ENCODE measurements at regions of chr5 and their contacts with region 1.

Region 1: DNA sequence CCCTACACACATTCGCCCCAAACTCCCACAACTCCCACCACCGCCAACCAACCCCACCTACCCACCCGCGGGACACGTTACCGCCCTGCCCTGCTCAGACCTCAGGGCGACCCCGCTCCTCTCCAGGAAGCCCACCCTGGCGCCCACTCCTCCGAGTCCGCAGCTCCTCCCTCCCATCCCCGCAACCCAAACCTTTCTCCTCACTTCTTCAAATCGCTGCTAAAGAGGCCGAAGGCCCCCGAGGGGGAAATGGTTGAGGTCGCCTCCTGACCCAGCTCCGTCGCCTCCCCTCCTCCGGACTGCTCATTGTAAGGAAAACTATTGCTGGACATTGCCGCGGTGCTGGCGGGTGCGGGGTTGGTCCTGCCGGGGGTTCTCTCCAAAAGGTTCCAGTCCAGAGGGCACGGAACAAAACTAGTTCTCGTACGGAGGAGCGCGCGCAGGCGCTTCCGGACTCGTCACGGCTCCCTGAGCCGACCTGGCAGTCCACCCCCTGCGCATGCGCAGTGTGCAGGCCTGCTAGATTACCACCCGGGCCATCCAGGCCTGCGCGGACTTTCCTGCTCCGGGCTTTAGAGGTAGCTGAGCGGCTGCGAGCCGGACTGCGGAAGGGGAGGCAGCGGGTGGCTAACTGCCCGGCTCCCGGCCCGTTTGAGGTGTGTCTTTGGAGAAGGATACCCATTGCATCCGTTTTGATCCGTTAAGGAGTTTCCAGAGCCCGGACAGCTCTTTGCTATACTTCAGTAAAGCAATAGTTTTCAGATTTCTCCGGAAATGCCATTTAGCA is at the start of gene AP3B1:
- DNase-seq: peak; percentile 96 to 97 (median 97)
- H3K4me3 ChIP-seq: peak within 1 kb of the TSS; percentile 88 to 99
- H3K4me3 Mint-ChIP-seq: peak within 1 kb of the TSS; percentile 91 to 100 (median 99)
- H3K27ac ChIP-seq: peak within 1 kb of the TSS; percentile 85
- H3K27ac Mint-ChIP-seq: peak within 1 kb of the TSS; percentile 86 to 100 (median 99)
- H3K4me1 ChIP-seq: peaks cover 29% of the 10 kb centered on the region
- H3K4me1 Mint-ChIP-seq: peaks cover 31 to 49% (median 41%) of the 10 kb centered on the region in 4 donors
- H3K27me3 ChIP-seq: no peaks in the 10 kb centered on the region
- H3K27me3 Mint-ChIP-seq: no peaks in the 10 kb centered on the region
- total RNA-seq, gene AP3B1: 33.3 to 36.9 TPM

Region 2: GRCh38 chr5:77491783-77492652 is 802.4 kb before region 1 on chr5 and contains the start of gene WDR41:
- CTCF ChIA-PET with region 1: interaction called, 4 read pairs
- POLR2A ChIA-PET with region 1: interaction called, 10 read pairs
- intact Hi-C with region 1: loop called (anchors 1 kb)
- DNase-seq: peak; percentile 79 to 87 (median 84)
- H3K4me3 ChIP-seq: peak within 1 kb of the TSS; percentile 57 to 91
- H3K4me3 Mint-ChIP-seq: peak within 1 kb of the TSS; percentile 85 to 95 (median 91)
- H3K27ac ChIP-seq: peak within 1 kb of the TSS; percentile 64
- H3K27ac Mint-ChIP-seq: peak within 1 kb of the TSS; percentile 65 to 94 (median 91)
- H3K4me1 ChIP-seq: peaks cover 7% of the 10 kb centered on the region
- H3K4me1 Mint-ChIP-seq: peaks cover 9 to 14% (median 10%) of the 10 kb centered on the region in 4 donors
- H3K27me3 ChIP-seq: no peaks in the 10 kb centered on the region
- H3K27me3 Mint-ChIP-seq: peaks cover 10 to 12% of the 10 kb centered on the region in 2 donors
- total RNA-seq, gene WDR41: 11.0 to 14.0 TPM

Region 3: GRCh38 chr5:77775790-77776553 is 518.5 kb before region 1 on chr5 and contains the start of gene TBCA:
- CTCF ChIA-PET with region 1: no interaction called
- POLR2A ChIA-PET with region 1: interaction called, 3 read pairs
- intact Hi-C with region 1: loop called (anchors 1 kb)
- DNase-seq: peak; percentile 91 to 94 (median 93)
- H3K4me3 ChIP-seq: peak within 1 kb of the TSS; percentile 61 to 85
- H3K4me3 Mint-ChIP-seq: peak within 1 kb of the TSS; percentile 90 to 98 (median 96)
- H3K27ac ChIP-seq: peak within 1 kb of the TSS; percentile 97
- H3K27ac Mint-ChIP-seq: peak within 1 kb of the TSS; percentile 88 to 99 (median 98)
- H3K4me1 ChIP-seq: peaks cover 46% of the 10 kb centered on the region
- H3K4me1 Mint-ChIP-seq: peaks cover 33 to 50% (median 45%) of the 10 kb centered on the region in 4 donors
- H3K27me3 ChIP-seq: no peaks in the 10 kb centered on the region
- H3K27me3 Mint-ChIP-seq: no peaks in the 10 kb centered on the region
- total RNA-seq, gene TBCA: 80.4 to 97.2 TPM

Region 4: GRCh38 chr5:78359831-78360673 is 65.6 kb after region 1 on chr5 and contains the start of gene SCAMP1:
- CTCF ChIA-PET with region 1: interaction called, 99 read pairs
- POLR2A ChIA-PET with region 1: interaction called, 274 read pairs
- intact Hi-C with region 1: loop called (anchors 1 kb)
- DNase-seq: peak; percentile 87 to 97 (median 94)
- H3K4me3 ChIP-seq: peak within 1 kb of the TSS; percentile 91 to 97
- H3K4me3 Mint-ChIP-seq: peak within 1 kb of the TSS; percentile 92 to 98 (median 95)
- H3K27ac ChIP-seq: peak within 1 kb of the TSS; percentile 91
- H3K27ac Mint-ChIP-seq: peak within 1 kb of the TSS; percentile 85 to 98 (median 96)
- H3K4me1 ChIP-seq: peaks cover 44% of the 10 kb centered on the region
- H3K4me1 Mint-ChIP-seq: peaks cover 30 to 78% (median 47%) of the 10 kb centered on the region in 4 donors
- H3K27me3 ChIP-seq: no peaks in the 10 kb centered on the region
- H3K27me3 Mint-ChIP-seq: no peaks in the 10 kb centered on the region
- total RNA-seq, gene SCAMP1: 28.9 to 29.7 TPM

Region 5: DNA sequence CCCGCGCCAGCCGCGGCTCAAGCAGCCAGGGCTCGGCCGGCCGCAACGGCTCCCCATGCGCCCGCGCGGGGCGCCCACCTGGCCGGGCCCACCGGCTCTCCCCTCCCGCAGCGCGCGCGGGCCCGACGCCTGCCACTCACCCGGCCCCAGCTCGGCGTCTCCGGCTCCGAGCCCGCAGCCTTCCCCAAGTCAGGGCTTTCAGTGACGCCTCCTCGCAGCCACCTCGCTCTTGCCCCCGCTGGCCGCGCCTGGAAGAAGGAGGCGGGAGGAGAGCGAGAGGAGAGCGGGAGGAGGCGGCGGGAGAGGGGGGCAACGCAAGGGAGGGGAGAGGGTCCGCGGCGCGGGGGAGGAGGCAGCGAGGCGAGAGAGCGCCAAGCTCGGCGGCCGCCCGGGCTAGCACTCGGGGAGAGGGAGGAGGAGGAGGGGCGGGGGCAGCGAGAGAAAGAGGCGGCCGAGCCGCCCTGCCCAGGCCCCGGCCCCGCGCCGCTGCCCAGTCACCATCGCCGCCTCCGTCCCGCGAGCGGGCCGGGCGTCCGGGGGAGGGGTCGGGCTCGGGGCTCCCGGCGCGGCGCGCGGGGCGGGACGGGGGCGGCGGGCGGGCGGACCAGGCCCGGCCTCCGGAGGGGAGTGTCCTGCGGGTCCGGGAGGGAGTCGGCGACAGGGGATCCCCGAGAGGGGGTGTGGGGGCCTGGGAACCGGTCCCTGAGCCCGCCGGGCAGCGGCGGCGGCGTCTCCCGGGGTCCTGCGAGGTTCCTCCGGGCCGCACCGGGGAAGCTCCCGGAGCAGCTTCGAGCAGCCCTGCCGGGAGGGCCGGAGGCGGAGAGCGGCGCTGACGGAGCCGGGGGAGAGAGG is 354.1 kb after region 1 on chr5 and contains the start of gene LHFPL2:
- CTCF ChIA-PET with region 1: no interaction called
- POLR2A ChIA-PET with region 1: no interaction called
- intact Hi-C with region 1: no loop called
- DNase-seq: peak in 2 of 5 donors; percentile 5 to 9
- H3K4me3 ChIP-seq: no peak within 1 kb of the TSS
- H3K4me3 Mint-ChIP-seq: peak within 1 kb of the TSS; percentile 69 to 86 (median 80)
- H3K27ac ChIP-seq: no peak within 1 kb of the TSS
- H3K27ac Mint-ChIP-seq: no peak within 1 kb of the TSS
- H3K4me1 ChIP-seq: peaks cover 15% of the 10 kb centered on the region
- H3K4me1 Mint-ChIP-seq: peaks cover 8 to 18% (median 8%) of the 10 kb centered on the region in 4 donors
- H3K27me3 ChIP-seq: peaks cover 28% of the 10 kb centered on the region
- H3K27me3 Mint-ChIP-seq: peaks cover 41 to 46% of the 10 kb centered on the region in 2 donors
- total RNA-seq, gene LHFPL2: 2.7 TPM

Region 6: DNA sequence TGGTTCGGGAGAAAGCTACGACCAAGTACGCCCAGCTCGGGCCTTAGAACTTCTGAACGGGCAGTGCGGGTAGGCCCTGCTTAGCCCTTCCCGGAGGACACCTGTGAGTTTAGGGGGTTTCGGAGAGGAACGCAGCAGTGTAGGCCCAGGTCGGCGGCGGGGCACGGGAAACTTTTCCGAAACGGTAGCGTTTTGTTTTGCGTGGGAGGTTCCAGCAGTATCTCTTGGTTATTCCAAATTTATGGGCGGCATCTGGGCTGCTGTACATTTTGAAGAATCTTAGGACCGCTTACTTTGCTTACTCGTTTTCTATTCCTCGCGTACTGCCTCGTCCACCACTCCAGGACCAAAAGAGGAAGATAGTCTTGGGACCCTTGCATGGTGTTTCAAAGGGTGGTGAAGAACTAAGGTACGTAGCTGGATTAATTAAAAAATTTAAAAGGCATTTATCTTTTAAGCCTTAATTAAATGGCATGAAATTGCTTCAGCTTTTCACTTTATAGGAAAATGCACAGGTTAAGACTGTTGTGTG is 1318.3 kb after region 1 on chr5:
- CTCF ChIA-PET with region 1: no interaction called
- POLR2A ChIA-PET with region 1: no interaction called
- intact Hi-C with region 1: loop called (anchors 2 kb)
- DNase-seq: no peak
- H3K4me3 ChIP-seq: peak overlapping the region; percentile 67 to 94
- H3K4me3 Mint-ChIP-seq: peak overlapping the region; percentile 94 to 100 (median 99)
- H3K27ac ChIP-seq: peak overlapping the region; percentile 96
- H3K27ac Mint-ChIP-seq: peak overlapping the region; percentile 98 to 99 (median 98)
- H3K4me1 ChIP-seq: peaks cover 32% of the 10 kb centered on the region
- H3K4me1 Mint-ChIP-seq: peaks cover 24 to 53% (median 36%) of the 10 kb centered on the region in 4 donors
- H3K27me3 ChIP-seq: no peaks in the 10 kb centered on the region
- H3K27me3 Mint-ChIP-seq: peaks cover 0 to 8% of the 10 kb centered on the region in 2 donors

Measured in CD4-positive, alpha-beta memory T cell (primary cell).